GM10248 (cell line): ENCODE measurements at regions of chrX and their contacts with region 1.

Region 1: GRCh38 chrX:40651620-40652223 is 4.4 kb upstream of the CXorf38 start:
- DNase-seq: peak; percentile 29
- CTCF ChIP-seq: peak; percentile 55

Region 2: DNA sequence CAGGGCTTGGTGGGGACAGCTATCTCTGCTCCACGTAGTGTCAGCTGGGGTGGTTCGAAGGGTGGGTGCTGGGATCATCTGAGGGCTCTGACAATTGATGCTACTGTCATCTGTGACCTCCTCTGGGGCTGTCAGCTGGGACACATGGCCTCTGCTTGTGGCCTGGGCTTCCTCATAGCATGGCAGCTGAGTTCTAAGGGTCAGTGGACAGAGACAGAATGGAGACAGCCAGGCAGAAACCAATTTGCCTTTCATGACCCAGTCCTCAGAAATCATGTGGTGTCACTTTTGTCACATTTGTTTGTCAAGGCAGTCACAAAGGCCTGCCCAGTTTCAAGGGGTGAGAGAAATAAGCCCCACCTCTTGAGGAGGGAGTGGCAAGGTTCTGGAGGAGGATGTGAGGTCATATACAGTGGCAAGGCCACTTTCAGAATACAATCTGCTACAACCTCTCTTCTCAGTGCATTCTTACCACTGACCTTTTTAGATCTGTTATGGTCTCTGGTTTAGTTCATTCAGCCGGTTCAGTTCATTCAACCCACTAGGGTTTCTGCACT is 450.3 kb before region 1 on chrX:
- CTCF ChIA-PET with region 1: no interaction called
- POLR2A ChIA-PET with region 1: no interaction called
- DNase-seq: peak; percentile 56
- CTCF ChIP-seq: no peak

Region 3: GRCh38 chrX:40543661-40544328 is 107.9 kb before region 1 on chrX:
- CTCF ChIA-PET with region 1: interaction called, 16 read pairs
- POLR2A ChIA-PET with region 1: no interaction called
- DNase-seq: peak; percentile 40
- CTCF ChIP-seq: peak; percentile 64

Region 4: GRCh38 chrX:40671126-40671525 is 19.4 kb after region 1 on chrX:
- CTCF ChIA-PET with region 1: interaction called, 16 read pairs
- POLR2A ChIA-PET with region 1: no interaction called
- DNase-seq: no peak
- CTCF ChIP-seq: no peak

Region 5: GRCh38 chrX:40792433-40792832 is 140.7 kb after region 1 on chrX:
- CTCF ChIA-PET with region 1: interaction called, 24 read pairs
- POLR2A ChIA-PET with region 1: no interaction called
- DNase-seq: no peak
- CTCF ChIP-seq: no peak

Region 6: GRCh38 chrX:41082783-41083182 is 431.1 kb after region 1 on chrX:
- CTCF ChIA-PET with region 1: no interaction called
- POLR2A ChIA-PET with region 1: no interaction called
- DNase-seq: no peak
- CTCF ChIP-seq: no peak

Region 7: GRCh38 chrX:41116948-41117347 is 465.2 kb after region 1 on chrX:
- CTCF ChIA-PET with region 1: interaction called, 10 read pairs
- POLR2A ChIA-PET with region 1: no interaction called
- DNase-seq: peak; percentile 50
- CTCF ChIP-seq: no peak